Adrenal gland (tissue), 19 donors: ENCODE measurements at regions of chr7 and their contacts with region 1.

Region 1: DNA sequence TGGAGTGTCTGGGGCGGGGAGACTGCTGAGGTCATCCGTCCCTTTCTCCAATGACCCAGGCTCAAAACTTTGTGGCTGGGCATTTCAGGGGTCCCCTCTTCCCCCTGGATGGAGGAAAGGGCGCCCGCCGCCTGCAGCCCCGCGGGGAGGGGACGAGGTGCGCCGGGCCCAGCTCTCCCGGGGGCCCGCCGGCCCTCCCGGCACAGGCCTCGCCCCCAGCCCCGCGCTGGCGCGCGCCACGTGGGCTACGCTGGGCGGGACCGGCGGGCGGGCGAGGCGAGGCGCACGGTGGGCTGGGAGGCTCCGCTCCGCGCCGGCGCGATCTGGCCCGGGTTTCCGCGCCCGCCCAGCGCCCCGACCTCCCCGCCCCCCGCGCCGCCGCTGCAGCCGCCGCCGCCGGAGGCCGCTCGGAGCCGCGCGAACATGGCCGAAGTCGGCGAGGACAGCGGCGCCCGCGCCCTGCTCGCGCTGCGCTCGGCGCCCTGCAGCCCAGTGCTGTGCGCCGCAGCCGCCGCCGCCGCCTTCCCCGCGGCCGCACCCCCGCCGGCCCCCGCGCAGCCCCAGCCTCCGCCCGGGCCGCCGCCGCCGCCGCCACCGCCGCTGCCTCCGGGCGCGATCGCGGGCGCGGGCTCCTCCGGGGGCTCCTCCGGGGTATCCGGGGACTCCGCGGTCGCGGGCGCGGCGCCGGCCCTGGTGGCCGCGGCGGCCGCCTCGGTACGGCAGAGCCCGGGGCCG is at the start of gene FOXK1:
- DNase-seq: peak; percentile 63 to 81 (median 78)
- H3K4me3 ChIP-seq: peak within 1 kb of the TSS; percentile 48 to 98 (median 66)
- H3K27ac ChIP-seq: peak within 1 kb of the TSS; percentile 82 to 97 (median 96)
- H3K4me1 ChIP-seq: peaks cover 19 to 40% of the 10 kb centered on the region in 2 donors
- H3K27me3 ChIP-seq: no peaks in the 10 kb centered on the region
- CTCF ChIP-seq: peak in 1 of 6 experiments; percentile 31
- POLR2A ChIP-seq: peak; percentile 42 to 87
- total RNA-seq, gene FOXK1: 10.4 to 63.1 (median 39.6) TPM

Region 2: GRCh38 chr7:4641667-4642467 is 40.2 kb before region 1 on chr7:
- intact Hi-C with region 1: loop called (anchors 5 kb)
- DNase-seq: peak; percentile 93 to 98 (median 96)
- H3K4me3 ChIP-seq: peak overlapping the region in 3 of 4 donors; percentile 31 to 71 (median 68)
- H3K27ac ChIP-seq: peak overlapping the region; percentile 39 to 89 (median 74)
- H3K4me1 ChIP-seq: no peaks in the 10 kb centered on the region
- H3K27me3 ChIP-seq: no peaks in the 10 kb centered on the region
- CTCF ChIP-seq: peak in 5 of 6 experiments; percentile 12 to 71 (median 55)
- POLR2A ChIP-seq: peak; percentile 73 to 92

Region 3: GRCh38 chr7:4744391-4745264 is 62.6 kb after region 1 on chr7:
- intact Hi-C with region 1: loop called in 1 of 2 experiments (anchors 5 kb)
- DNase-seq: peak; percentile 98 to 100 (median 99)
- H3K4me3 ChIP-seq: peak overlapping the region in 1 of 4 donors; percentile 34
- H3K27ac ChIP-seq: peak overlapping the region; percentile 27 to 92 (median 88)
- H3K4me1 ChIP-seq: peaks cover 24 to 54% of the 10 kb centered on the region in 2 donors
- H3K27me3 ChIP-seq: no peaks in the 10 kb centered on the region
- CTCF ChIP-seq: no peak
- POLR2A ChIP-seq: peak in 1 of 2 donors; percentile 82

Region 4: GRCh38 chr7:4753711-4754432 is 71.8 kb after region 1 on chr7:
- intact Hi-C with region 1: loop called (anchors 5 kb)
- DNase-seq: peak; percentile 71 to 91 (median 84)
- H3K4me3 ChIP-seq: no peak overlapping the region
- H3K27ac ChIP-seq: peak overlapping the region in 2 of 5 donors; percentile 10 to 20
- H3K4me1 ChIP-seq: no peaks in the 10 kb centered on the region
- H3K27me3 ChIP-seq: no peaks in the 10 kb centered on the region
- CTCF ChIP-seq: peak; percentile 88 to 94 (median 92)
- POLR2A ChIP-seq: no peak

Region 5: DNA sequence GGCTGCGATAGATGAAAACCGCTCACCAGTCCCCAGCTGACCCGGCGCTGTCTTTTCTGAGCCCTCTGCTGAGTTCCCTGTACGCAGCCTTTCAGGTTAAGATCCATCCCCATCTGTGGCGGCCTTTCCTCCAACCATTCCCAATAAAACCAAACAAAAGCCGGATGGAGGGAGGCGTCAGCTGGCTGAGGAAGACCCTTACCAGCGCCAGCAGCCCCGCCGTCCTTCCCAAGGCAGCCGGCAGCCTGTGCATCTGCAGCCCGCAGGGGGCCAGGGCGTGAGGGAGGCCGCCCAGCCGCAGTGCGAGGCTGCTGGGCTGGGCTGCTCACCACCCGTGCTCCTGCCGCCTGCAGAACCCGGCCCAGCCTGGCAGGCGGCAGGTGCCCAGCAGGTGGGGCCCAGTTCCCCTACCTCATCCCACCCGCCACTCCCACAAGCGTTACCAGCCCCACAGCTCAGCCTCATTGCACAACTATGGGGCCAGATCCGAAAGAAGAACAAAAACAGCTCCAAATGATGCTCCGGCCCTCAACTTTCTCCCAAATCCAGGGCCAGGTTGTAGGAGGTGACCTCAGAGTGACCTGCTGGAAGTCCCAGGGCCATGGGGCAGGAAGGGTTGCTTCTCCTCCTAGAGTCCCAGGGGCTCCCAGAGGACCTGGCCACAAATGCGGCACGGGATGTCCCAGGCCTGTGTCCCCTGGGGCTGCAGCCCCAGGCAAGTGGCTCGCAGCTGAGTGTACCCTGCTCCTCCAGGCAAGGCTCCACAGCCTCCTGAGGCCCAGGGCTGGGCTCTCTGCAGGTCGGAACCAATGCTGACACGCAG is 156.0 kb after region 1 on chr7:
- intact Hi-C with region 1: no loop called
- DNase-seq: no peak
- H3K4me3 ChIP-seq: no peak overlapping the region
- H3K27ac ChIP-seq: no peak overlapping the region
- H3K4me1 ChIP-seq: no peaks in the 10 kb centered on the region
- H3K27me3 ChIP-seq: no peaks in the 10 kb centered on the region
- CTCF ChIP-seq: no peak
- POLR2A ChIP-seq: no peak

Region 6: DNA sequence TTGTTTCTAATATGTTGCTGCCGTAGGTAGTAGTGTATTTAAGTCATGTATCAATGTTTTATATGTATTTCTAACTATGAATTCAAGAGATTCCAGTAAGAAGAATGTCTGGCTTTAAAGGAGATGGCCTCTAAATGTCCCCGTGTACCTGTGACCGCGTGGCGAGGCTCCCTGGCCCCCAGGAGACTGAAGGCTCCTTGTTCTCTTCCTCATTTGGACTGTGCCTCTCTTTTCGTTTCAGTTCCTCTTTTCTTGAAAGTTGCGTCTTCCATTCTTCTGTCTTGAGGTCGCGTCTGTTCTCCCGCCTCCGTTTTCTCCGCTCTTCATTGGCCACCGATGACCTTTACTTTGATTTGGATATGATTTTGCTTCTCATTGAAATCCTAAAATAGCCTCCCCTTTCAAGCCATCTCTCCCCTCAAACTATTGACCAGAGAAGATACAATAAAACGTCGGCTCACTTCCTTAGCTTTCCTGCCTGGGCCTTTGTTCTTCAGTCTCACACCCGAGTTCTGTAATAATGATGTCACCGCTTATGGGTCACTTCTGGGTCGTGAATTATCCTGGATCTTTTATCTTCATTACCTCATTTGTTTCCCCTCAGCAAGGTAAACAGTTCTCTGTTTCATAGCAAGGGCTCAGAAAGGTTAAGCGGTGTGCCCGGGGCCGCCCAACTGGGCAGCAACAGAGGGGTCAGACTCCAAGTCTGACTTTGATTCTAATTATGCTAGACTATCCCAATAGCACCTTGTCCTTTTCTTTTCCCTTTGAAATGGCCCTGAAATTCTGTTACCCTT is 536.7 kb after region 1 on chr7:
- intact Hi-C with region 1: no loop called
- DNase-seq: peak in 2 of 7 donors; percentile 11 to 19
- H3K4me3 ChIP-seq: no peak overlapping the region
- H3K27ac ChIP-seq: peak overlapping the region in 2 of 5 donors; percentile 40 to 57
- H3K4me1 ChIP-seq: no peaks in the 10 kb centered on the region
- H3K27me3 ChIP-seq: no peaks in the 10 kb centered on the region
- CTCF ChIP-seq: no peak
- POLR2A ChIP-seq: no peak

Region 7: DNA sequence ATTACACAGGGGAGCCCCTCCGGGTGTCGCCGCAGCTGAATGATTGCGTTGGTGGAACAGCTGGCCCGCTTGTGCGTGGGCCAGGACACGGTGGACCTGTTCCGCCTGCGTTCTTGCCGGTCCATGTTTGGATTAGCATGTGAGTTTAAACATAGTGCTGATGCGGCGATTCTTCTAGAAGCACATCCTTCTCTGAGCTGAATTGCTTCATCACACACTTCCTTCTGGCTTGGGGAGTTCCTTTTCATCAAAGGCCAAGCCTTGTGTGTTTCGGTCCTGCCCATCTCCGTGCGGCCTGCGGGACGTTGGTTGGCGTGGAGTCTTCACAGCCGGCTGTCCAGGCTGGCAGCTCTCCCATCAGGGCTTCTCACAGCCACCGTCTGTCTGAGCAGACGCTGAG is 555.2 kb after region 1 on chr7:
- intact Hi-C with region 1: no loop called
- DNase-seq: peak; percentile 49 to 81 (median 67)
- H3K4me3 ChIP-seq: no peak overlapping the region
- H3K27ac ChIP-seq: peak overlapping the region in 2 of 5 donors; percentile 13 to 59
- H3K4me1 ChIP-seq: peaks cover 0 to 14% of the 10 kb centered on the region in 2 donors
- H3K27me3 ChIP-seq: no peaks in the 10 kb centered on the region
- CTCF ChIP-seq: no peak
- POLR2A ChIP-seq: no peak

Region 8: GRCh38 chr7:5363729-5364128 is 681.7 kb after region 1 on chr7:
- intact Hi-C with region 1: no loop called
- DNase-seq: no peak
- H3K4me3 ChIP-seq: no peak overlapping the region
- H3K27ac ChIP-seq: no peak overlapping the region
- H3K4me1 ChIP-seq: peaks cover 6 to 9% of the 10 kb centered on the region in 2 donors
- H3K27me3 ChIP-seq: no peaks in the 10 kb centered on the region
- CTCF ChIP-seq: no peak
- POLR2A ChIP-seq: no peak